Tibial artery (tissue), 4 donors: ENCODE measurements at regions of chr11 and their contacts with region 1.

Region 1: GRCh38 chr11:36492724-36493304 is 17.3 kb downstream of the TRAF6 start:
- DNase-seq: no peak
- H3K4me3 ChIP-seq: no peak overlapping the region
- H3K27ac ChIP-seq: no peak overlapping the region
- H3K4me1 ChIP-seq: peaks cover 0 to 5% (median 0%) of the 10 kb centered on the region in 4 donors
- H3K27me3 ChIP-seq: no peaks in the 10 kb centered on the region
- CTCF ChIP-seq: peak; percentile 61 to 74

Region 2: GRCh38 chr11:36300651-36301050 is 192.2 kb before region 1 on chr11:
- intact Hi-C with region 1: loop called (anchors 5 kb)
- DNase-seq: no peak
- H3K4me3 ChIP-seq: no peak overlapping the region
- H3K27ac ChIP-seq: no peak overlapping the region
- H3K4me1 ChIP-seq: no peaks in the 10 kb centered on the region
- H3K27me3 ChIP-seq: no peaks in the 10 kb centered on the region
- CTCF ChIP-seq: no peak